Tibial artery (tissue), 4 donors: ENCODE measurements at regions of chr9 and their contacts with region 1.

Region 1: GRCh38 chr9:103116246-103116645 is 121.1 kb downstream of the CYLC2 start:
- DNase-seq: no peak
- H3K4me3 ChIP-seq: no peak overlapping the region
- H3K27ac ChIP-seq: no peak overlapping the region
- H3K4me1 ChIP-seq: no peaks in the 10 kb centered on the region
- H3K27me3 ChIP-seq: no peaks in the 10 kb centered on the region
- CTCF ChIP-seq: no peak

Region 2: DNA sequence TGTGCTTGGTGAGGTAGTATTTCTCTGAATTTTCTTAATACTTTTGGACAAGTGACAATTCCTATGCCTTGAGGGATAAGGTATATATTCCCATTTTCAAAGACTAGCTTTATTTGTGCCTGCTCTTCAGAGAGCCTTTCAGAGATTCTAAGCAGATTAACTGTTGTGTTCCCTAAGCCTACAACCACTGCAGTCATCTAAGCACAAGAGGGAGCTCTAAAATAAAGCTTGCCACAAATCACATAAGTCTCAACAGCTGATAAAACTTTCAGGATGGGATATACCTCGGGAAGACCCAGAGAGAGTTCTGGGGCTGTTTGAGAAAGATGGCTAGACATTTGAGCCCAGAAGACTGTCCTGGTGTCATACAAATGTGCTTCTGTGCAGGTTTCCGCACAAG is 36.2 kb after region 1 on chr9:
- intact Hi-C with region 1: loop called (anchors 5 kb)
- DNase-seq: no peak
- H3K4me3 ChIP-seq: no peak overlapping the region
- H3K27ac ChIP-seq: no peak overlapping the region
- H3K4me1 ChIP-seq: no peaks in the 10 kb centered on the region
- H3K27me3 ChIP-seq: no peaks in the 10 kb centered on the region
- CTCF ChIP-seq: no peak

Region 3: GRCh38 chr9:103245369-103245768 is 129.1 kb after region 1 on chr9:
- intact Hi-C with region 1: no loop called
- DNase-seq: no peak
- H3K4me3 ChIP-seq: no peak overlapping the region
- H3K27ac ChIP-seq: no peak overlapping the region
- H3K4me1 ChIP-seq: no peaks in the 10 kb centered on the region
- H3K27me3 ChIP-seq: no peaks in the 10 kb centered on the region
- CTCF ChIP-seq: no peak

Region 4: GRCh38 chr9:103287361-103287760 is 171.1 kb after region 1 on chr9:
- intact Hi-C with region 1: no loop called
- DNase-seq: no peak
- H3K4me3 ChIP-seq: no peak overlapping the region
- H3K27ac ChIP-seq: no peak overlapping the region
- H3K4me1 ChIP-seq: no peaks in the 10 kb centered on the region
- H3K27me3 ChIP-seq: no peaks in the 10 kb centered on the region
- CTCF ChIP-seq: no peak